ENCODE measurements at regions of chr10 and their contacts with region 1.

Region 1: GRCh38 chr10:103481974-103482531 is 3.0 kb upstream of the CALHM3 start:
- DNase-seq: peak; percentile 74
- CTCF ChIP-seq: peak; percentile 59

Region 2: GRCh38 chr10:103451831-103452505 is 30.1 kb before region 1 on chr10 and contains the start of gene CALHM2:
- CTCF ChIA-PET with region 1: interaction called, 42 read pairs
- POLR2A ChIA-PET with region 1: no interaction called
- DNase-seq: peak; percentile 89
- CTCF ChIP-seq: no peak

Region 3: GRCh38 chr10:103470761-103471653 is 11.0 kb before region 1 on chr10:
- CTCF ChIA-PET with region 1: interaction called, 16 read pairs
- POLR2A ChIA-PET with region 1: no interaction called
- DNase-seq: peak; percentile 88
- CTCF ChIP-seq: no peak

Region 4: GRCh38 chr10:103618575-103619423 is 136.7 kb after region 1 on chr10:
- CTCF ChIA-PET with region 1: no interaction called
- POLR2A ChIA-PET with region 1: no interaction called
- DNase-seq: no peak
- CTCF ChIP-seq: no peak

Region 5: GRCh38 chr10:104230490-104230889 is 748.4 kb after region 1 on chr10:
- CTCF ChIA-PET with region 1: no interaction called
- POLR2A ChIA-PET with region 1: no interaction called
- DNase-seq: peak; percentile 21
- CTCF ChIP-seq: no peak

Measured in GM10248 (cell line).